Head of caudate nucleus (tissue), 42 donors: ENCODE measurements at regions of chr4 and their contacts with region 1.

Region 1: DNA sequence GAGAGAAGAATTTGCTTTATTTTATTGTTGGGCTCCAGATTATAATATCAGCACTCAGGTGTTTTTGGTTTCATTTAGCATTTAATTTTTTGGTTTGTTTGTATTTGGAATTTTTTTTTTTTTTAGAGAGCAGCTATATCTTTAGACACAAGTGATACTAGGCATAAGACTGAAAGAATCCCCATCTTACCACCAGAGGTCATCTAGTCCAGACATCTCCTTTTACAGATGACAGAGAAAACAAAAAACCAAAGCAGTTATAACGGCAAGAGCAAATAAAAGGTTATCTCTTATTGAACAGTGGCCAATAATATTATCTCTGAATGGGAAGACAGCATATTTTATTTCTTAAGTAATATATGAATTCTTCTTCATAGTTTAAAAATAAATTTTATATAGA is 22.8 kb downstream of the USP38 start:
- DNase-seq: peak in 1 of 42 donors; percentile 27

Region 2: GRCh38 chr4:143133977-143134376 is 73.6 kb before region 1 on chr4:
- intact Hi-C with region 1: no loop called
- DNase-seq: no peak

Region 3: GRCh38 chr4:143241892-143242291 is 34.3 kb after region 1 on chr4:
- intact Hi-C with region 1: no loop called
- DNase-seq: no peak

Region 4: DNA sequence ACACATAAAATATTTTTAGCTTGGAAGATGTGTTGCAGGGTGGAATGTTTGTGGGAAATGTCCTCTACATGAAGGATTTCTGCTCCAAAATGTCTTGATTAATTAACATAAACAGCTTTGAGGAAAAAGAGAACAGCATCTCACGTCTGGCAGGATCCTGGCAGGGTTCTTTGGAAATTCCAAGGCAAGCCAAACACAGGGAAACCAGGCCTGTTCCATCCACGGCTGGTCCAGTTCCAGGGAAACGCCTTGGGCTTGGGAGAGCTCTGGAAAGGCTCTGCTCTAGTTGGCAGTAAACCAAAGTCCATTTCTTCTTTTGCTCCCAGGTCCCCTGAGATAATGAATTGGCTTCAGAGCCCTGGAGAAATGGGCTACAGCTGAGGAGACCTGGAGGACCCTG is 86.8 kb after region 1 on chr4:
- intact Hi-C with region 1: no loop called
- DNase-seq: peak in 21 of 42 donors; percentile 1 to 47 (median 16)

Region 5: GRCh38 chr4:143513306-143514168 is 306.0 kb after region 1 on chr4 and contains the start of gene SMARCA5:
- intact Hi-C with region 1: loop called (anchors 10 kb)
- DNase-seq: peak; percentile 92 to 98 (median 95)